Astrocyte of the cerebellum (primary cell): ENCODE measurements at regions of chr20 and their contacts with region 1.

Region 1: DNA sequence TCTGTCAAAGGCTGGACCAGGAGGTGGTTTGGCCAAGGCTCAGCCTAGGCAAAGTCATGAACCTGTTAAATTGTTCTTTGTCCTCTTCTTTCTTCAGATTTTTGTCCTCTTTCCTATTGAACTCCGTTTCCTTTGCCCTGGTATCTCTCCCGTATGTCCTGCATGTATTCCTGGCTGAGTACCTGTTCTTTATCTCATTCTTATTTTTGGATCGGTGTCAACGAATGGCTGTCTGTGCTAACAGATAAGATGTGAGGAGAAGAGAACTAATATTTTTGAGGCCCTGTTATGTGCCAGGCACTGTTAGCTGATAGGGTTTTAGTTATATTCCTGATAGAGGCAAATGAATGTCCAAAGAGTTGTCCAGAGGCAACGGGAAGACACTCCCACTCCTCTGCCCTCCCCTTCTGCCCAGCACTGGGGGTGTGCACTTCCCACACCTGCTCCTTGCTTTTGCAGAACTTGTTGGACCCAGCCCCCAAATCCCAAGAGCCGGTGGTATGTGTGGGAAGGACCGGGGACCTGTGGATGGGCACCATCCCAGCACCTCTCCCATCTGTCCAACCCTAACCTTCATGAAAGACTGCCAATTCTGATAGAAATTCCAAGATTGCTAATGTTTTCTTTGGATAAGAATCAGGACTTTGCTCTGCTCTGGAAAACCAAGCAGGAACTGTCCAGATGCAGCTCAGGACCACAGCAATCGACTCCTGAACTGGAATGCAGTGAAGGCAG is 20.6 kb downstream of the MMP24OS start:
- DNase-seq: no peak
- H3K4me3 ChIP-seq: no peak overlapping the region
- CTCF ChIP-seq: no peak

Region 2: GRCh38 chr20:35192111-35192872 is 65.0 kb before region 1 on chr20:
- in situ Hi-C with region 1: loop called (anchors 5 kb)
- DNase-seq: no peak
- H3K4me3 ChIP-seq: no peak overlapping the region
- CTCF ChIP-seq: no peak

Region 3: GRCh38 chr20:35306931-35307517 is 49.7 kb after region 1 on chr20:
- in situ Hi-C with region 1: loop called (anchors 5 kb)
- DNase-seq: peak; percentile 35
- H3K4me3 ChIP-seq: no peak overlapping the region
- CTCF ChIP-seq: peak; percentile 91